ENCODE measurements at regions of chr13 and their contacts with region 1.

Region 1: DNA sequence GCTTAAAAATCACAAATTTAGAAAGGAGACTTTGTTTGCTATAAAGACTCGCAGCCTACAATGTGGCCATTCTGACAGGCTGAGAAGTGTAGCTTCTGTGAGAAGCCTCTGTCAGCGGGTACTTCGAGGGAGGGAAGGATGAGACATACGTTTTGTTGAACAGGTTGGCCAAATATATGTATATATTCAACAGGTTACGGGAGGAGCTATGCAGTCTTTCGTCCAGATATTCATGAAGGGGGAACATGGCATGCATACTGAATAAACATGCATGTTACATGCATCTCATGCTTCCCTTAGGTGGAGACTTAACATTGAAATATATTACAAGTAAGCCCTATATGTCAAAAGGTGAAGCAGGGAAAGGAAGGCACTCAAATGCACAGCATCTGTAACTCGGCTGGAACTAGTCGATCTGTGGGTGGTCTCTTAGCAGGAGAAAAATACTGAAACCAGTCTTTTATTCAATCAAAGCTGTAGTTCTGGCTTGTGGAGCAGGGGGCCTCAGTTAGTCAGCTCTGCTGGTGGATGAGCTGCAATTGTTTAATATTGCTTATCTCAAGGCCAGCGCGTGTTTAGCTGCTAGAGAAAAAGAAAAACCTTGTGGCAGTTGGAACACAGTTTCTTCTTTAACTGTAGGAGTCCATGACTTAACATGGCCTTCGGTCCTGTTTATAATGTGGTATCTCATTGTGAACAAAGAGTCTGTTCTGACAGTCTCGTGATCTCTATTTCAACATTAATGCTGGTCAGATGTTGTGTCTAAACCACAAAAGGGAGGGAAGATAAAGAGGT is 94.3 kb downstream of the FAM216B start:
- DNase-seq: no peak
- H3K4me3 ChIP-seq: no peak overlapping the region
- CTCF ChIP-seq: peak; percentile 52

Region 2: DNA sequence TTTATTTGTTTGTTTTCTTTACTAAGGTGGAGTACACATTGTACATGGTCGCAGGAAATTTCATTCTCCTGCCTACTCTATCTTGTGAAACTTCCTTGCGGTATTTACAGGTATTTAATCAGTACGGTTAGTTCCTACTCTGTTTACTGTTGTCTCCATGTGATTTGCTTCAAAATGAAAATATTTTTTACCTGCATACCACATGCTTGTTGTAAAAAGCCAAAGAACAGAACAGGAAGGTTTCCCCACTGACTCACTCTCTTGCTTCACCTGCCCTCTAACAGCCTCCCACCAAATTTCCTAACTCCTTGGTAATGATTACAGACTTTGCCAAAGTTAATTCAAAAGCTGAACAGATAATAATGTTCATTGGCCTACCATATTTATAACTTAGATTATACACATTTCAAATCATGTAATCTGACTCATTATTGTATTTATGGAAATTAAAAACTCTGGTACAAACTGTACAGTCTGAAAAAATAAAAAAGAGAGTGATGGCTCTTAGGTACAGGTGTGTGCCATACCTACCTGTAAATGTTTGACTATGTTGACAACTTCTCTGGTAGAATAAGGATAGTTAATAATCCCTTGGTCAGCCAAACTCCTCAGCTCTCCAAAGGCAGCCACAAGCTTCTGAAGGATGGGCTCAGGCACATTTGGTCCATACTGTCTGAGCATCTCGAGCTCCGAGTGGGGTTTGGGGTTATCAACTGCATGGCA is 1154.7 kb before region 1 on chr13:
- in situ Hi-C with region 1: no loop called
- DNase-seq: no peak
- H3K4me3 ChIP-seq: no peak overlapping the region
- CTCF ChIP-seq: no peak

Region 3: GRCh38 chr13:42969558-42970172 is 94.0 kb after region 1 on chr13:
- in situ Hi-C with region 1: loop called (anchors 5 kb)
- DNase-seq: no peak
- H3K4me3 ChIP-seq: no peak overlapping the region
- CTCF ChIP-seq: peak; percentile 73